Calu3 (cell line): ENCODE measurements at regions of chr7 and their contacts with region 1.

Region 1: DNA sequence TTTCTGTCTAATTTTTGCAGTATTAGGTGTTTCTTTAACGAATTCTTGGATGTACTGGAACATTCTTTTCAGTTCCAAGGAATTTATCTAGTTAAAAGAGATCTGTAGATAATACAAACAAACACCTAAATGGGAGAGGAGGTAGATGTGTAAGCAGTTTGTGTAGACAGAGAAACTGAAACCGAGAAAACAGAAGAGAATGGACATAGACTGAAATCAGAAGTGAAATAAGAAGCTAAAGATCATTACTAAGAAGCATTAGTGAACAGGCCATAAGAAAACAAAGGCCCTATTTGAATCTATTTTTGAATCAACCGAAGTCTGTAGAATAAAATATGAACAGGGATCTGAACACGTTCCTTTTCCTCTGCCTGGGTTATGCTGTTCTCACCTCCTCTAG is 26.5 kb upstream of the TMEM229A start:
- DNase-seq: no peak
- H3K4me3 Mint-ChIP-seq: no peak overlapping the region
- H3K27ac Mint-ChIP-seq: no peak overlapping the region
- H3K4me1 Mint-ChIP-seq: no peaks in the 10 kb centered on the region
- H3K27me3 Mint-ChIP-seq: peaks cover 11% of the 10 kb centered on the region
- CTCF ChIP-seq: no peak

Region 2: DNA sequence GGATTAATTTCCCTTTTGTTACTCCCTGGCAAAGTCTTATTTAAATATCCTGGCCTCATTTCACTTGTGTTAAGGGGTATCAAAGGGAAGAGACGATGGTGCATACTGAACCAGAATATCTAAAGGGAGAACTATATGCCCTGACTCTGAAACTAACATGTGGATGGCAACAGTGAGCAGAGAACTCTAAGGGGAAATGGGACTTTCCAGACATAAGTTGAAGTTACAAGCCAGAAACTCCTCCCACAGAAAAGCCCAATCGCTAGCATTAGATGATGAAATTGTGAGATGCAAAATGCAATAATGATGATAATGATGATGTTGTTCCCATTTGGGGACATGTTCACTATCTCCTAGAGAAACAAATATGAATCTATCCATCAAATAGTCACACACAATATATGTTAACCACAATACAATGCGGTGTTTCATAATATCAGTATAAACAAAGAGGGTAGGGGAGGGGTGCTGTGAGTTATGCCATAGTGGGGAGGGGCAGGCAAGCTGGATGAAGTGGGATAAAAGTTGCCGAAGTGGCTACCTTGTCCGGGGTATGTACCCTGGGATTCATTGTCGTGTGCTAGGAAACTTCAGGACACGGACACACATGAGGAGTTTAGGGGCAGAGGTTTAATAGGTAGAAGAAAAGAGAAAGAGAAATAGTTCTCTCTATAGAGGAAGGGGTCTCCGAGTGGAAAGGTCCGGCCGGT is 63.6 kb before region 1 on chr7:
- CTCF ChIA-PET with region 1: no interaction called
- intact Hi-C with region 1: loop called (anchors 10 kb)
- DNase-seq: no peak
- H3K4me3 Mint-ChIP-seq: no peak overlapping the region
- H3K27ac Mint-ChIP-seq: no peak overlapping the region
- H3K4me1 Mint-ChIP-seq: no peaks in the 10 kb centered on the region
- H3K27me3 Mint-ChIP-seq: peaks cover 30% of the 10 kb centered on the region
- CTCF ChIP-seq: no peak